Spleen (tissue), 13 donors: ENCODE measurements at regions of chr9 and their contacts with region 1.

Region 1: GRCh38 chr9:18857769-18858168 is 175.2 kb downstream of the SAXO1 start:
- DNase-seq: no peak
- H3K4me3 ChIP-seq: no peak overlapping the region
- H3K27ac ChIP-seq: no peak overlapping the region
- H3K4me1 ChIP-seq: no peaks in the 10 kb centered on the region
- H3K27me3 ChIP-seq: no peaks in the 10 kb centered on the region
- CTCF ChIP-seq: no peak
- POLR2A ChIP-seq: no peak

Region 2: DNA sequence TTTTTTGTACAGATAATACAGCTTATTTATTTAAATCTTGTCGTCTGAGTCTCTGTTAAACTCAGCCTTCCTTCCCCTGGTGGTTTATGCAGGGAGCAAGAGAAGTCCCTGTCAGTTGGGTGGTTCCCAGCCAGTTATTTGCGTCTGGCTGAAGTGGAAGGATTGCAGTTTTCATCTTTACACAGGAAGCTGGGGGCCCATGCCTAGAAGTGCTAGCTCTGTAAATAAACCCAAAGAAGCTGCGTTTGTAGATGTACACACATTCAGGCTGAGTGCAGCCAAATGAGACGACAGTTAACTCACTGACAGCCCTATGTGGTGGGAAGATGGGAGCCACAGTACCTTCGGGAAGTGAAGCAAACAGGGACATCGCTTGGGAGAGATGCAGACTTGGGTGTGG is 53.1 kb after region 1 on chr9:
- intact Hi-C with region 1: loop called (anchors 10 kb)
- DNase-seq: no peak
- H3K4me3 ChIP-seq: no peak overlapping the region
- H3K27ac ChIP-seq: no peak overlapping the region
- H3K4me1 ChIP-seq: no peaks in the 10 kb centered on the region
- H3K27me3 ChIP-seq: peaks cover 0 to 23% (median 0%) of the 10 kb centered on the region in 7 donors
- CTCF ChIP-seq: no peak
- POLR2A ChIP-seq: no peak